A673 (cell line): ENCODE measurements at regions of chr19 and their contacts with region 1.

Region 1: GRCh38 chr19:19224852-19225494 is 13.2 kb downstream of the NCAN start:
- DNase-seq: peak; percentile 90
- H3K4me3 ChIP-seq: peak overlapping the region; percentile 35
- H3K27ac ChIP-seq: no peak overlapping the region
- H3K4me1 ChIP-seq: no peaks in the 10 kb centered on the region
- H3K27me3 ChIP-seq: peaks cover 27% of the 10 kb centered on the region
- CTCF ChIP-seq: peak; percentile 77

Region 2: GRCh38 chr19:18895038-18895823 is 329.7 kb before region 1 on chr19:
- CTCF ChIA-PET with region 1: no interaction called
- POLR2A ChIA-PET with region 1: no interaction called
- intact Hi-C with region 1: no loop called
- DNase-seq: no peak
- H3K4me3 ChIP-seq: peak overlapping the region; percentile 60
- H3K27ac ChIP-seq: no peak overlapping the region
- H3K4me1 ChIP-seq: peaks cover 10% of the 10 kb centered on the region
- H3K27me3 ChIP-seq: no peaks in the 10 kb centered on the region
- CTCF ChIP-seq: peak; percentile 28; the same call in 1 of the 2 replicates

Region 3: DNA sequence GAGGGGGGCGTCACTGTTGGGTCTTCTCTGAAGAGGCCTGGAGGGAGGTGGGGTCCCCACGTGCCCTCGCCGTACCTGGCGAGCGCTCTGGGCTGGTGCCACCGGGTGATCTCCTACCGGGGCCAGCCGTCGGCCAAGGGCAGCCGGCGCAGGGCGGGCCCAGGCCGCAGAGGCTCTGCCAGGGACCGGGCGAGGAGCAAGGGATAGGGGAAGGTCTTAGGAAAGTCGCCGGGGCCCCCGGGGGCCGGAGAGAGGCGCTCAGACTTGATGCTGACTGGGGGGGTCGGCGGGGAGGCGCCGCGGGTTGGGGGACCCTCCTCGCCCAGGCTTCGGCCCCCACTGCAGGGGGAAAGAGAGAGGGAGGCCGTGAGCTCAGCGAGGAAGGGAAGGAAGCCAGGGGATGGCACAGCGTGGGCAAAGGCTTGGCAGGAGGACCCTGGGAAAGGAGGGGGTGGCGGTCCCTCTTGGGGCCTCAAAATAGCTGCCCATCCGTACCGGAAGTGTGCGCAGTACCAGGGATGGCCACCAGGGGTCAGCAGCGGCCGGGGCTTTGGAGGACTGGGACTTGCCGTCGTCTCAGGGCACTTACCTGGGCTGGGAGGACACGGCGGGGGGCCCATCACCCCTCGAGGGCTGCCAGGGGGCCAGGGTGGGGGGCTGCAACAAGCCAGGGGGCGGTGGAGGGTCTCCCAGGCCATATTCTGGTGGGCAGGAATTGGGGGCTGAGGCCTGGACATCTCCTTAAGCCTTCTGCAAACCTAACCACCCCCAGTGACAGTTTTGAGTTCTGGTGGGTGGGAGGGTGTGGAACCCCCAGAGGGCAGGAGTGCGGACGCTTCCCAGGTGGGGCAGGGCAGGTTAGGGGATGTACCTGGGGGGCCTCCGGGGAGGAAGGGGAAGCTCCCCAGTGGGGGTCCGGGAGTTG is 79.0 kb before region 1 on chr19:
- CTCF ChIA-PET with region 1: interaction called, 7 read pairs
- POLR2A ChIA-PET with region 1: no interaction called
- intact Hi-C with region 1: loop called (anchors 2 kb)
- DNase-seq: peak; percentile 83
- H3K4me3 ChIP-seq: peak overlapping the region; percentile 29
- H3K27ac ChIP-seq: peak overlapping the region; percentile 72
- H3K4me1 ChIP-seq: no peaks in the 10 kb centered on the region
- H3K27me3 ChIP-seq: no peaks in the 10 kb centered on the region
- CTCF ChIP-seq: peak; percentile 97

Region 4: DNA sequence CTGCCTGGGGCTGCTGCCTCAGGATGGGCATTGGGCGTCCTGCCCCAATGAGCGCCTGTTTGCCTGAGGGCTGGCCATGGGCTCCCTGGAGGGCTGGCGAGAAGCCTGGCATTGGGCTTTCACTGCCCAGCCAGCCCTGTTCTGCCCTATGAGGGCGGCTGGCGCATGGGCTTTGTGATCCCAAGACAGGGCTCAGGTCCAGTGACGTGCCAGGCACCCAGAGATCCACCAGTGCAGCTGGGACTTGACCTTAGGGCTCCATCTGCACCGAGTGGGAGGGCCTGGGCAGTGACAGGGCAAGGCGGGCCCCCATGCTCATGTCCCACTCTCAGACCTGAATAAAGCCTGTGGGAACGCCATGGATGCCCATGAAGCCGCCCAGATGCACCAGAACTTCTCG is 130.0 kb after region 1 on chr19:
- CTCF ChIA-PET with region 1: no interaction called
- POLR2A ChIA-PET with region 1: no interaction called
- intact Hi-C with region 1: no loop called
- DNase-seq: no peak
- H3K4me3 ChIP-seq: no peak overlapping the region
- H3K27ac ChIP-seq: no peak overlapping the region
- H3K4me1 ChIP-seq: no peaks in the 10 kb centered on the region
- H3K27me3 ChIP-seq: no peaks in the 10 kb centered on the region
- CTCF ChIP-seq: no peak